ENCODE measurements at regions of chr17 and their contacts with region 1.

Region 1: DNA sequence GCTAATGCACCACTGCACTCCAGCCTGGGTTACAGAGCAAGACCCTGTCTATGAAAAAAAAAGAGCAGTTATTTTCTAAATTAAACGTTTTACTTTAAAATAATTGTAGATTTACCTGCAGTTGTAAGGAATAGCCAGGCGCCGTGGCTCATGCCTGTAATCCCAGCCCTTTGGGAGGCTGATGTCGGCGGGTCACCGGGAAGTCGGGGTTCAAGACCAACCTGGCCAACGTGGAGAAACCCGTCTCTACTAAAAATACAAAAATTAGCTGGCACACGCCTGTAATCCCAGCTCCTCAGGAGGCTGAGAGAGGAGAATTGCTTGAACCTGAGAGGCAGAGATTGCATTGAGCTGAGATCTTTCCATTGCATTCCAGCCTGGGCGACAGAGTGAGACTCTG is 52.0 kb downstream of the TANC2 start:
- DNase-seq: no peak
- ATAC-seq: no peak
- H3K4me3 ChIP-seq: no peak overlapping the region
- H3K27ac ChIP-seq: no peak overlapping the region
- H3K4me1 ChIP-seq: no peaks in the 10 kb centered on the region
- H3K27me3 ChIP-seq: no peaks in the 10 kb centered on the region
- CTCF ChIP-seq: no peak

Region 2: DNA sequence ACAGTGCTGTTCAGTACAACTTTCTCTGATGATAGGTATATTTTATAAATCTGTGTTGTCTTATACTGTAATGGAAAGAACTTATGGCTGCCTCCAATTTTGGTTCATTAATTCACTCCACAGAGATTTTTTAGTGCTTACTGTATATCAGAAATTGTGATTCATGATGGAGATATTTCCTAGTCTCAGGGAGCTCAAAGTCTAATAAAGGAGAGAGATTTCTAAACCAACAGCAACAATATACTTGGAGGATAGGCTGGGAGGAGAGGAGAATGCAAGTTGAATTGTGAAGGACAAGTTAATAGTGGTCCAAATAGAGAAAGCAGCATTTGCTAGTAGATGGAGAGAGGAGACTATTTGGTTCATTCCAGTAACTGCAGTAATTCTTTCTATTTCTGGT is 11.5 kb after region 1 on chr17:
- CTCF ChIA-PET with region 1: no interaction called
- POLR2A ChIA-PET with region 1: no interaction called
- intact Hi-C with region 1: no loop called
- DNase-seq: peak; percentile 62
- ATAC-seq: peak; percentile 64
- H3K4me3 ChIP-seq: no peak overlapping the region
- H3K27ac ChIP-seq: no peak overlapping the region
- H3K4me1 ChIP-seq: peaks cover 14% of the 10 kb centered on the region
- H3K27me3 ChIP-seq: no peaks in the 10 kb centered on the region
- CTCF ChIP-seq: no peak

Region 3: DNA sequence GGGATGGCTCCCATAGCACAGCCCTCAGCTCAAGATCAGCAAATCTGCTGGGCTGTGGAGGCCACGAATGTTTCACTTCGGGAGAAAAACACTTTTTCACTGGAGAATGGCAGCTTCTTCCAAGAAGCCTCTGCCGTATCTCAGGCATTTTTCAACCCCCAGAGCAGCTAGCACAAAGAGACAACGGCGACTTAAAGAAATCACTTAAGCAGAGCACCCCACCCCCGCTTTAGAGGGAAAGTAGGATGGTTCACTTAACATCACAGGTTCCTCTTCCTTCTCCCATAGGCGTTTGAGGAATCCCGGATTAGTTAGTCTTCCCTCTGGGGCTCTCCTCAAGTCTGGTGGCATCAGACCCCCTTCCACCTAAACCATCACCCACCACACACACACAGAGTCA is 400.5 kb after region 1 on chr17:
- CTCF ChIA-PET with region 1: no interaction called
- POLR2A ChIA-PET with region 1: interaction called, 14 read pairs
- intact Hi-C with region 1: no loop called
- DNase-seq: no peak
- ATAC-seq: no peak
- H3K4me3 ChIP-seq: no peak overlapping the region
- H3K27ac ChIP-seq: no peak overlapping the region
- H3K4me1 ChIP-seq: no peaks in the 10 kb centered on the region
- H3K27me3 ChIP-seq: no peaks in the 10 kb centered on the region
- CTCF ChIP-seq: no peak

Measured in PC-3 (cell line).